Activated CD8-positive, alpha-beta T cell treated with anti-CD3 and anti-CD28 coated beads, Interleukin-2, amount 10 ng/mL, durations not matched to agents 7 days and 5 days (primary cell): ENCODE measurements at regions of chr13 and their contacts with region 1.

Region 1: DNA sequence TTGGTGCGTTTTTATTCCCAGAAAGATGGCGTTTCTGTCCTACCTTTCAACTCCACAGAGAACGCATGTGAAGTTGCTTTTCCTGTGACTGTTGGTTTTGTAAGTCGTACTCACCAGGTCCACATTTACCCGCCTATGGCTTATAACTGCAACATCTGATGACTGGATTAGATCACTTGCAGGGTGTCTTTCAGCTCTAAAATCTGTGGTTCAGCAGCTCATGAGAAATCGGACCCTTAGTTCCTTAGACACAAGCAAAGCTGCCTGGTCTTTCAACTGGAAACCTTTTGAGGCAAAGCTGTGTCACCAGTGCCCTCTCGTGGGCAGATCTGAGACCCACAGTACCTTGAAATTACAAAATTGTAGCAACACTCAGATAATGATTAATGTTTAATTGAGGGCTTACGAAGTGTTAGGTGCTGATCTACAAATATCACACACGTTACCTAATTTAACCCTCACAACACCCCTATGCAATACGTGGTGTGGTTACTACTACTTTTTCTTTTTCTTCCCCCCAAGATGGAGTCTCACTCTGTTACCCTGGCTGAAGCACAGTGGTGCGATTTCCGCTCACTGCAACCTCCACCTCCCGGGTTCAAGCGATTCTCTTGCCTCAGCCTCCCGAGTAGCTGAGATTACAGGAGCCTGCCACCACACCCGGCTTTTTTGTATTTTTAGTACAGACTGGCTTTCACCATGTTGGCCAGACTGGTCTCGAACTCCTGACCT is 65.4 kb downstream of the RUBCNL start:
- DNase-seq: peak; percentile 86
- ATAC-seq: peak; percentile 88
- H3K4me3 Mint-ChIP-seq: peak overlapping the region; percentile 70
- H3K27ac Mint-ChIP-seq: peak overlapping the region; percentile 84
- H3K4me1 Mint-ChIP-seq: peaks cover 18% of the 10 kb centered on the region
- H3K27me3 Mint-ChIP-seq: peaks cover 2% of the 10 kb centered on the region

Region 2: GRCh38 chr13:45482571-45483173 is 839.0 kb before region 1 on chr13:
- CTCF ChIA-PET with region 1: no interaction called
- POLR2A ChIA-PET with region 1: no interaction called
- DNase-seq: no peak
- ATAC-seq: no peak
- H3K4me3 Mint-ChIP-seq: no peak overlapping the region
- H3K27ac Mint-ChIP-seq: no peak overlapping the region
- H3K4me1 Mint-ChIP-seq: no peaks in the 10 kb centered on the region
- H3K27me3 Mint-ChIP-seq: no peaks in the 10 kb centered on the region

Region 3: DNA sequence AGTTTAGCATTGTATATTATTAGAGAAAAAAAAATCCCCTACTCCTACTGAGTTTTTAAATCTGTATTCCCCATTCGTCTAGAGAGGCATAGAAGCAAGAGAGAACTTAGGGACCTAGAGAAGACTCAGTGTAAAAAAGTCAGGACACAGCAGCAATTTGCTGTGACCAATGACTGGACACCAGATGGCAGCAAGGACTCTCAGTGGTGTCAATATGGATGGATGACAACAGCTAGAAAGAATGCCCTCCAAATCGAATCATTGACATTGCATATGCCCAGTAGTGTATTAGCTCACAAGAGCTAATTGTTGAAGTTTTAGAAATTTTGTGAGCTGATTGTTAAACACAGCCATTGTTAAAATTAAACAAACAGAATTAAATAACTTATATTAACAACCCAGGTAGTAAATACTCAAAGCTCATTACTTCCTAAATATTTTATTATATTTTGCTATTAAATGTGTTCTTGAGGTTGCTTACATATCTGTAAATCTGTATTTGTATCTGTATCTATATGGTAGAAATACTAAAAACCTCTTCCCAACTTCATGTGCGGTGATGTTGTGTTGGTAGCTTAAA is 514.0 kb before region 1 on chr13:
- CTCF ChIA-PET with region 1: interaction called, 12 read pairs
- POLR2A ChIA-PET with region 1: no interaction called
- DNase-seq: peak; percentile 41
- ATAC-seq: peak; percentile 36
- H3K4me3 Mint-ChIP-seq: no peak overlapping the region
- H3K27ac Mint-ChIP-seq: no peak overlapping the region
- H3K4me1 Mint-ChIP-seq: peaks cover 5% of the 10 kb centered on the region
- H3K27me3 Mint-ChIP-seq: peaks cover 4% of the 10 kb centered on the region

Region 4: GRCh38 chr13:46149272-46150133 is 172.2 kb before region 1 on chr13:
- CTCF ChIA-PET with region 1: interaction called, 21 read pairs
- POLR2A ChIA-PET with region 1: no interaction called
- DNase-seq: no peak
- ATAC-seq: peak; percentile 23
- H3K4me3 Mint-ChIP-seq: no peak overlapping the region
- H3K27ac Mint-ChIP-seq: peak overlapping the region; percentile 75
- H3K4me1 Mint-ChIP-seq: peaks cover 29% of the 10 kb centered on the region
- H3K27me3 Mint-ChIP-seq: no peaks in the 10 kb centered on the region

Region 5: GRCh38 chr13:46168341-46168740 is 153.3 kb before region 1 on chr13:
- CTCF ChIA-PET with region 1: interaction called, 19 read pairs
- POLR2A ChIA-PET with region 1: no interaction called
- DNase-seq: no peak
- ATAC-seq: peak; percentile 15
- H3K4me3 Mint-ChIP-seq: peak overlapping the region; percentile 74
- H3K27ac Mint-ChIP-seq: peak overlapping the region; percentile 91
- H3K4me1 Mint-ChIP-seq: peaks cover 93% of the 10 kb centered on the region
- H3K27me3 Mint-ChIP-seq: no peaks in the 10 kb centered on the region

Region 6: DNA sequence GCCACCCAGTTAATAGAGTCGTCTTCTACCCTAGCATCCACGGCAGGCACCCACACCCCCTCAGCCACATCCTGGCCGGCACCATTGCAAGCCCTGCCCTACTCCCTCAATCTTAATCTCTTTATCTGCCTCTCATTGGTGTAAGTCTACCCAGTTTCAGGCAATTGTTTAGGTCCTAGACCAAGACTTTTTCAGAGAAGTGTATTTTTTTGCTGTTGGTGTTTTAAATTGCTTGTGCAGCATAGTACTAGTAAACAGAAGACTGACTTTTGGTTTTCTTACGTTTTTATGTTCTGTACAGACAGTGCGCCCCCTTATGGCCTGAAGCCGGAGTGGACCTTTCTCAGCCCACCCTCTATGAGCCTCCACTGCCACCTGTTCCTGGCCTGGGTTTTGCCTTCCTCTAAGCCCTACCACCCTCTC is 137.4 kb before region 1 on chr13:
- CTCF ChIA-PET with region 1: interaction called, 10 read pairs
- POLR2A ChIA-PET with region 1: no interaction called
- DNase-seq: peak; percentile 89
- ATAC-seq: peak; percentile 66
- H3K4me3 Mint-ChIP-seq: peak overlapping the region; percentile 90
- H3K27ac Mint-ChIP-seq: peak overlapping the region; percentile 98
- H3K4me1 Mint-ChIP-seq: peaks cover 38% of the 10 kb centered on the region
- H3K27me3 Mint-ChIP-seq: no peaks in the 10 kb centered on the region

Region 7: DNA sequence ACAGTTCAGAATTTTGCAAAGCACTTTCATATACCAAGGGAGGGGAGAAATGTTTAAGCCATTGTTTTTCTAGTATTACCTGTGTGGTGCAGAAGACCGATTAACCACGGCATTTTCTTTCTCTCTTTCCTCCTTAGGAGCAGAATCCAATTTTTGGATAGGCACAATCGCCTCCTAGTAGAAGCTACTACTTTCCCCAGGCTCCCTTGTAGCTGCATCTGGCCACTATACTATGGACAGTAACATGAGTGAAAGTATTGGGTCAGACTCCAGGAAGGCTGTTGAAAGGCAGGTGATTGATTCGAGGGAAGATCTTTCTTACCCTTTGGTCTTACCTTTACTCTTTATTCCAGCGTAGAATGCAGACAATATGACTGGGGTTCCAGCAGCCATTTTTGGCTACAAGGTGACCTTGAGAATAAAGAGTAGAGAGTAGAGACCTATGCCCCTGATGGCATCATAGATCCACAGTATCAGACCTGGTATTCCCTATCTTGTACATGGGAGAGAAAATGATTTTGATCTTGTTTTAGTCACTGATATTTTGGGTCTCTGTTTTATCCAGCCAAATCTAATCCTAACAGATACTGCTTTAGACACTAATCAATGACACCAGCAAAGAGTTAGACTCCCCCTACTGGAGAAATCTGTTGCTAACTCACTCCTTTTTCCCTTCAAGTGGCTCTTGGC is 32.9 kb before region 1 on chr13:
- CTCF ChIA-PET with region 1: interaction called, 160 read pairs
- POLR2A ChIA-PET with region 1: no interaction called
- DNase-seq: peak; percentile 50
- ATAC-seq: peak; percentile 88
- H3K4me3 Mint-ChIP-seq: no peak overlapping the region
- H3K27ac Mint-ChIP-seq: peak overlapping the region; percentile 51
- H3K4me1 Mint-ChIP-seq: peaks cover 19% of the 10 kb centered on the region
- H3K27me3 Mint-ChIP-seq: no peaks in the 10 kb centered on the region

Region 8: GRCh38 chr13:46332772-46333171 is 11.1 kb after region 1 on chr13:
- CTCF ChIA-PET with region 1: interaction called, 10 read pairs
- POLR2A ChIA-PET with region 1: interaction called, 3 read pairs
- DNase-seq: no peak
- ATAC-seq: no peak
- H3K4me3 Mint-ChIP-seq: no peak overlapping the region
- H3K27ac Mint-ChIP-seq: no peak overlapping the region
- H3K4me1 Mint-ChIP-seq: peaks cover 32% of the 10 kb centered on the region
- H3K27me3 Mint-ChIP-seq: peaks cover 4% of the 10 kb centered on the region

Region 9: GRCh38 chr13:46489586-46490023 is 167.9 kb after region 1 on chr13:
- CTCF ChIA-PET with region 1: no interaction called
- POLR2A ChIA-PET with region 1: no interaction called
- DNase-seq: no peak
- ATAC-seq: no peak
- H3K4me3 Mint-ChIP-seq: no peak overlapping the region
- H3K27ac Mint-ChIP-seq: no peak overlapping the region
- H3K4me1 Mint-ChIP-seq: no peaks in the 10 kb centered on the region
- H3K27me3 Mint-ChIP-seq: no peaks in the 10 kb centered on the region